Activated CD8-positive, alpha-beta T cell treated with anti-CD3 and anti-CD28 coated beads, Interleukin-2, amount 10 ng/mL, durations not matched to agents 7 days and 5 days (primary cell): ENCODE measurements at regions of chr2 and their contacts with region 1.

Region 1: DNA sequence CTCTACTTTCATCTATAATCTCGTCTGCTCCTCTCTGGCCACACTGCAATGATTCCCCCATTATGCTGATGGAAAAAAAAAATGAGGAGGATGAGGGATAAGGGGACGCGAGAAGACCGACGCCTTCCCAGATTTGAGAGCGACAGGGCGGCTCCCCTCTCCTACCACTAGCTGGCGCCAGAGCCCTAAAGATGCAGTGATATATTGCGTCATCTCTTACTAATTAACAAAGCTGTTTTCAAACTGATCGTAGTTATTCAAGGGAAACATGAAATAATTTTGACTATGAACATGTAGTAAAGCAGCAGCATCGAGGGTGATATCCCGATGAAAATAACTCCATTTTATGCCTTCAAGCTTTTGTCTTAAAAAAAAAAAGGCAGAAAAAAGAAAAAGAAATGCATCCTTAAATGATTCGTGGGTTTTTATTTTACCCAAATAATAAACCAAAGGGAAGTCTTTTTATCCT is 48.0 kb upstream of the HNRNPA3 start:
- DNase-seq: peak; percentile 86
- ATAC-seq: peak; percentile 79
- H3K4me3 Mint-ChIP-seq: no peak overlapping the region
- H3K27ac Mint-ChIP-seq: no peak overlapping the region
- H3K4me1 Mint-ChIP-seq: peaks cover 29% of the 10 kb centered on the region
- H3K27me3 Mint-ChIP-seq: peaks cover 10% of the 10 kb centered on the region

Region 2: DNA sequence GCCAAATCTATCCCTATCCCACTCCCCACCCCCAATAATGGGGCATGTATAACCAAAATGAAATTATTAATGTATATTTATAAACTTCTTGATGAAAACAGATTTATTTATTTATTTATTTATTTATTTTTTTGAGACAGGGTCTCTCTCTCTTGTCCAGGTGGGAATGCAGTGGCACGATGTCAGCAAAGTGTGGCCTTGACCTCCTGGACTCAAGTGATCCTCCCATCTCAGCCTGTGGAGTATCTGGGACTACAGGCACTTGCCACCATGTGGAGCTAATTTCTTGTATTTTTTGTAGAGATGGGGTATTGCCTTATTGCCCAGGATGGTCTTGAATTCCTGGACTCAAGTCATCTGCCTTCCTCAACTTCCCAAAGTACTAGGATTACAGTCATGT is 20.0 kb after region 1 on chr2:
- CTCF ChIA-PET with region 1: interaction called, 12 read pairs
- POLR2A ChIA-PET with region 1: no interaction called
- DNase-seq: no peak
- ATAC-seq: no peak
- H3K4me3 Mint-ChIP-seq: no peak overlapping the region
- H3K27ac Mint-ChIP-seq: no peak overlapping the region
- H3K4me1 Mint-ChIP-seq: peaks cover 2% of the 10 kb centered on the region
- H3K27me3 Mint-ChIP-seq: peaks cover 15% of the 10 kb centered on the region

Region 3: DNA sequence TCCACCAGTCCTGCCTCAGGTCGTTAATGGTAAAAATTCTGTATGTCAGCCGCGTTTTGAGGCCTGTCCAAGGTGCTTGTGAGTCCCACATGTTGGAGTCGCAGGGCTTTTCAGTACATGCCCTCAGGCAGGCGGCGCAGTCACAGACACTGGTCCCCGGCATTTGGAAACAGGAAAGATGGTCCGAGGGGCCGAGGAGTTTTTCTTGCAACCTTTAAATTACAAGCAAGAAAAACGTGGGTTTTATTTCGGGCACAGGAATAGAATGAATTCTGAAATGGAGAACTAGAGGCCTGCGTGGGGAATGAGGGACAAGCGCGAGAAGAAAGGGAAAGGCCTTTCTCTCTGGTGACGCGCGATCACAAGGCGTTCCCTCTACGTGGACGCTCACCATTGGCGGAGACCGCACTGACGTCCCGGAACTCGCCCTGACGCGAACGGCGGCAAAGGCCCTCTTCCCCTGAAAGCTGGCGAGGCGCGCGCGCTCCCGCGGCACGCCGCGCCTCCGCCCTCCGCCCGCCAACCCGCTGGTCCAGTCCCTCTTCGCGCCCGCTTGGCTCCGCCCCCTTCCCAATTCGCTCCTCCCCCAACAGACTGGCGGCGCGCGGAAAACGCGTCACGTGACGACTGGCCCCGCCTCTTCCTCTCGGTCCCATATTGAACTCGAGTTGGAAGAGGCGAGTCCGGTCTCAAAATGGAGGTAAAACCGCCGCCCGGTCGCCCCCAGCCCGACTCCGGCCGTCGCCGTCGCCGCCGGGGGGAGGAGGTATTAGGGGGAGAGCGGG is 47.7 kb after region 1 on chr2 and contains the start of gene HNRNPA3:
- CTCF ChIA-PET with region 1: interaction called, 21 read pairs
- POLR2A ChIA-PET with region 1: interaction called, 28 read pairs
- DNase-seq: peak; percentile 100
- ATAC-seq: peak; percentile 88
- H3K4me3 Mint-ChIP-seq: peak within 1 kb of the TSS; percentile 92
- H3K27ac Mint-ChIP-seq: peak within 1 kb of the TSS; percentile 99
- H3K4me1 Mint-ChIP-seq: peaks cover 42% of the 10 kb centered on the region
- H3K27me3 Mint-ChIP-seq: no peaks in the 10 kb centered on the region
- total RNA-seq, gene HNRNPA3: 329 to 350 TPM

Region 4: GRCh38 chr2:177239932-177240630 is 75.5 kb after region 1 on chr2:
- CTCF ChIA-PET with region 1: interaction called, 40 read pairs
- POLR2A ChIA-PET with region 1: no interaction called
- DNase-seq: peak; percentile 64
- ATAC-seq: peak; percentile 86
- H3K4me3 Mint-ChIP-seq: peak overlapping the region; percentile 25
- H3K27ac Mint-ChIP-seq: peak overlapping the region; percentile 88
- H3K4me1 Mint-ChIP-seq: peaks cover 68% of the 10 kb centered on the region
- H3K27me3 Mint-ChIP-seq: no peaks in the 10 kb centered on the region

Region 5: DNA sequence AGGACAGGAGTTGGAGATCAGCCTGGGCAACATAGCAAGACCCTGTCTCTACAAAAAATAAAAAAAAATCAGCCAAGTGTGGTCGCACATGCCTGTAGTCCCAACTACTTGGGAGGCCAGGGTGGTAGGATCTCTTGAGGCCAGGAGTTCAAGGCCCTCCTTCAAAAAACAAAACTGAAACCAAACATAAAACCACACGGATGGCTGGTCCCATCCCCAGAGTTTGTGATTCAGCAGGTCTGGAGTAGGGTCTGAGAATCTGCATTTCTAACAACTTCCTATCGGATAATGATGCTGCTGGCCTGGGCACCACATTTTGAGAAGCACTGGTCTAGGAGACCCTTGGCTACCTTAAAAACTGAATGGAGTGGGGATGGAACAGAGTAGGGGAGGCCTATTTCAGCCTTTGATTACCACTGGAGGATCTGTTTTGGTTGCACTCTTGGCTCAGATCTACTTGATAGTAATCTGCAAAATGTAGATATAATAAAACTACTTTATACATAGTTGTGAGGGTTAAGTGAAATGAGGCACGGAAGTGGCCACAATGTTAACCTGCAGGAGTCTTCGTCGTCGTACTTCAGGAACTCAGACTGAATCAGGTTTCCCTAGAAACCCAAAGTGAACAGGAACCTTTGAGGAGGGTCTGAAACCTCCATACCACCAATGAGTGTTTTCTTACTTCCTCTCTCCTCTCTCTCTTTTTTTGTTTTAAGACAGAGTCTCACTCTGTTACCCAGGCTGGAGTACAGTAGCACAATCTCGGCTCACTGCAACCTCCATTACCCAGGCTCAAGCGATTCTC is 125.4 kb after region 1 on chr2:
- CTCF ChIA-PET with region 1: interaction called, 64 read pairs
- POLR2A ChIA-PET with region 1: no interaction called
- DNase-seq: peak; percentile 58
- ATAC-seq: peak; percentile 76
- H3K4me3 Mint-ChIP-seq: peak overlapping the region; percentile 56
- H3K27ac Mint-ChIP-seq: peak overlapping the region; percentile 94
- H3K4me1 Mint-ChIP-seq: peaks cover 72% of the 10 kb centered on the region
- H3K27me3 Mint-ChIP-seq: no peaks in the 10 kb centered on the region

Region 6: GRCh38 chr2:177314194-177314593 is 149.6 kb after region 1 on chr2:
- CTCF ChIA-PET with region 1: interaction called, 11 read pairs
- POLR2A ChIA-PET with region 1: no interaction called
- DNase-seq: no peak
- ATAC-seq: no peak
- H3K4me3 Mint-ChIP-seq: no peak overlapping the region
- H3K27ac Mint-ChIP-seq: no peak overlapping the region
- H3K4me1 Mint-ChIP-seq: peaks cover 20% of the 10 kb centered on the region
- H3K27me3 Mint-ChIP-seq: no peaks in the 10 kb centered on the region

Region 7: DNA sequence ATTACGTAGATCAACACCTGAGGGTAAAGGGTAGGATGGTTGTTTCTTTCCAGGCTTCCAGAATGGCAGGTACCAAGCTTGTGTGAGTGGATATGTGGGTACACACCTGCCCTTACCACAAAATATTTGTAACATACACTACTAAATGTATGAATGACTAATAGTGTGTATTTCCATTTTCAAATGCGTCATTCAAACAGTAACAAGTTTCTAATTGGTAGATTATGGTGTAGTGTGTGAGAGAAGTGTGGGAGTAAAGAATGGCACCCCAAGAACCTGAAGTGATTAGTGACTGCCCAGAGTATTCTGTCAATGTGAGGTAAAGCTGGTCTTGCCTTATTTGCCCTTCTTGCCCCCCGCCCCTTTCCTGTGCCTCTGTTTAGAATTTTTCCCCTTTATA is 249.1 kb after region 1 on chr2:
- CTCF ChIA-PET with region 1: interaction called, 57 read pairs
- POLR2A ChIA-PET with region 1: no interaction called
- DNase-seq: no peak
- ATAC-seq: no peak
- H3K4me3 Mint-ChIP-seq: no peak overlapping the region
- H3K27ac Mint-ChIP-seq: no peak overlapping the region
- H3K4me1 Mint-ChIP-seq: peaks cover 6% of the 10 kb centered on the region
- H3K27me3 Mint-ChIP-seq: no peaks in the 10 kb centered on the region